CD4-positive, alpha-beta T cell (primary cell): ENCODE measurements at regions of chr11 and their contacts with region 1.

Region 1: DNA sequence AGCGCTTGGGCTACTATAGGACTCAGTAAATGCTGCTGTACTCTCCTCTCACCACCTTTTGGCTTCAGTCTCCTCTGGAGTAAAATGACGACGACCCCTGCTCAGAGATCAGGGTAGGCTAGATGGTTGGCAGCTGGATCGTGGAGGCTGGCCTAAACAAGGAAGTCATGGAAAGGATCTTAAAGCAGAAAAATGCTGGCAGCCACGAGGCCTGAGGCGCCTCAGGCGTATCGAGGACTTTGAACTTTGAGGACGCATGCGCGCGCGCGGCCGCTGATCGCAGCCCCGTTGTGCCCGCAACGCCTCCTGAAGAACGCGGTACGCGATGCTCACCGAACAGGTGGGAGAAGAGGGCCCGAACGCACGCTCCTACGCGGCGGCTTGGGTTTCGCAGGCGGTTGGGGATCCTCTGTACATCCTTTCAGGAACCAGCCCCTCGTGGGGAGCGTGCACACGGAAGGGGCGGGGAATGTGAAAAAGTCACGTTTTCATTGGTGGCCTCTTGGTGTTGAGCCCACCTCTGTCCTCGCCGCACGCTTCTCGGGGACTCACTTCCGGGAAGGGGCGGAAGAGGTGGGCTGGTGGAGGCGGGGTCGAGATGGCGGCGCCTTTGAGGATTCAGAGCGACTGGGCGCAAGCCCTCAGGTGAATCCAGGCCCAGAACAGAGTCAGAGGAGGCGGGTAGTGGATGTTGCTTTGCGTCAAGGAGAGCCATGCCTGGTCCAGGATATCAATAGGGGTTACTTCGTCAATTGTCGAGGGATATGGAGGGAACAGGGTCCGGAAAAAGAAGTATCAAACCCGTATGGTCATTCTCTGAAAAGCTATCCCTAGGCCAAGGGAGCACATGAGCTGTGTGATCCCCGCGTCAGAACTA is at the starts of genes COA4 and PAAF1:
- DNase-seq: peak; percentile 83 to 98 (median 90)
- ATAC-seq: peak; percentile 95
- H3K4me3 ChIP-seq: peak within 1 kb of the TSS; percentile 74
- H3K4me3 Mint-ChIP-seq: peak within 1 kb of the TSS; percentile 96
- H3K27ac ChIP-seq: peak within 1 kb of the TSS; percentile 71 to 90
- H3K27ac Mint-ChIP-seq: peak within 1 kb of the TSS; percentile 91
- H3K4me1 ChIP-seq: peaks cover 30% of the 10 kb centered on the region
- H3K4me1 Mint-ChIP-seq: peaks cover 52% of the 10 kb centered on the region
- H3K27me3 ChIP-seq: no peaks in the 10 kb centered on the region
- H3K27me3 Mint-ChIP-seq: no peaks in the 10 kb centered on the region
- CTCF ChIP-seq: no peak
- total RNA-seq, gene COA4: 20.7 to 23.9 TPM
- total RNA-seq, gene PAAF1: 6.2 to 7.6 TPM

Region 2: DNA sequence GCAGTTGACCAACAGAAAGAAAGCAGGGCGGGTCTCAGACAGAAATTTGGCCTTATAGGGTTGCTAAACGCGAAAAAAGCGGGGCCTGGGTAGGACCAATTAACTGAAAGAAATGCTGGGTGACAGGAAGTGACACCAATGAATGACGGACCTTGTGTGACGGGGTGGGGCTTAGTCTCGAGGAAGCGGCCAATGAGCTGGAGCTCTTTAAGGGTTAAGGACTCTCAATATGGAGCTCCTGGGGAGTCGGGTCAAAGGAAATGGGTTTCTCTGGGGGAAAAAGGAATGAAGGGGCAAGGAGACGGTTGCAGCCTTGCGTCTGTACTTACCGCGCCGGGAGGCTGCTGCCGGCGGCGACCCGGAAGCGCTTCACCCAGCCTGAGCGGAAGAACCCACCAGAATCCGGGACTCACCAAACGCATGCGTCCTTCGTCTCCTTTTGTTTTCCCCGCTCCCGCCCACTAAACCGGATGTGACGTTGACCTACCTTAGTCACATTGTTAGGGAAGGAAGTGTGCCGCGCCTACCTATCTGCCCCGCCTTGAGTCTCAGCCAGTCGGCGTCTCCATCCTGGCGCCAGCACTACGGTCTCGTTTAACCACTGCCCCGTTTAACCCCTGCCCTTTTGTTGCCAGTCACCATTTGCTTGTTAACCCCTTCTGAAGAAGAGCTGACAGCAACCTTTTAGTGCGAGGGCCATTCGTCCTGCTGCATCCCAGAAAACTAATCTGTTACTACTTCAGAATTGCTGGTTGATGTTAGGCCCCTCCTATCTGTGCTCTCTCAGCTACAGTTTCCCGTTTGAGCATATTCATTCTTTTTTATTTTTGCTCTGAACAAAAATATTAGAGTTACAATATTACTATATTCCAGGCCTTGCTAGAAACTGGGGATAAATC is 1764.1 kb before region 1 on chr11 and contains the start of gene ANAPC15:
- CTCF ChIA-PET with region 1: no interaction called
- POLR2A ChIA-PET with region 1: no interaction called
- intact Hi-C with region 1: loop called in 1 of 2 experiments (anchors 5 kb)
- DNase-seq: peak; percentile 93 to 99 (median 97)
- ATAC-seq: peak; percentile 84
- H3K4me3 ChIP-seq: peak within 1 kb of the TSS; percentile 68
- H3K4me3 Mint-ChIP-seq: peak within 1 kb of the TSS; percentile 93
- H3K27ac ChIP-seq: peak within 1 kb of the TSS; percentile 97 to 98
- H3K27ac Mint-ChIP-seq: peak within 1 kb of the TSS; percentile 98
- H3K4me1 ChIP-seq: peaks cover 17% of the 10 kb centered on the region
- H3K4me1 Mint-ChIP-seq: peaks cover 19% of the 10 kb centered on the region
- H3K27me3 ChIP-seq: no peaks in the 10 kb centered on the region
- H3K27me3 Mint-ChIP-seq: no peaks in the 10 kb centered on the region
- CTCF ChIP-seq: no peak
- total RNA-seq, gene ANAPC15: 48.8 to 52.5 TPM

Region 3: GRCh38 chr11:73376160-73376802 is 500.4 kb before region 1 on chr11 and contains the start of gene RELT:
- CTCF ChIA-PET with region 1: no interaction called
- POLR2A ChIA-PET with region 1: no interaction called
- intact Hi-C with region 1: loop called in 1 of 2 experiments (anchors 10 kb)
- DNase-seq: peak; percentile 79 to 97 (median 93)
- ATAC-seq: peak; percentile 94
- H3K4me3 ChIP-seq: peak within 1 kb of the TSS; percentile 84
- H3K4me3 Mint-ChIP-seq: peak within 1 kb of the TSS; percentile 93
- H3K27ac ChIP-seq: peak within 1 kb of the TSS; percentile 78 to 91
- H3K27ac Mint-ChIP-seq: peak within 1 kb of the TSS; percentile 88
- H3K4me1 ChIP-seq: peaks cover 58% of the 10 kb centered on the region
- H3K4me1 Mint-ChIP-seq: peaks cover 42% of the 10 kb centered on the region
- H3K27me3 ChIP-seq: no peaks in the 10 kb centered on the region
- H3K27me3 Mint-ChIP-seq: no peaks in the 10 kb centered on the region
- CTCF ChIP-seq: peak; percentile 86
- total RNA-seq, gene RELT: 107 to 114 TPM

Region 4: DNA sequence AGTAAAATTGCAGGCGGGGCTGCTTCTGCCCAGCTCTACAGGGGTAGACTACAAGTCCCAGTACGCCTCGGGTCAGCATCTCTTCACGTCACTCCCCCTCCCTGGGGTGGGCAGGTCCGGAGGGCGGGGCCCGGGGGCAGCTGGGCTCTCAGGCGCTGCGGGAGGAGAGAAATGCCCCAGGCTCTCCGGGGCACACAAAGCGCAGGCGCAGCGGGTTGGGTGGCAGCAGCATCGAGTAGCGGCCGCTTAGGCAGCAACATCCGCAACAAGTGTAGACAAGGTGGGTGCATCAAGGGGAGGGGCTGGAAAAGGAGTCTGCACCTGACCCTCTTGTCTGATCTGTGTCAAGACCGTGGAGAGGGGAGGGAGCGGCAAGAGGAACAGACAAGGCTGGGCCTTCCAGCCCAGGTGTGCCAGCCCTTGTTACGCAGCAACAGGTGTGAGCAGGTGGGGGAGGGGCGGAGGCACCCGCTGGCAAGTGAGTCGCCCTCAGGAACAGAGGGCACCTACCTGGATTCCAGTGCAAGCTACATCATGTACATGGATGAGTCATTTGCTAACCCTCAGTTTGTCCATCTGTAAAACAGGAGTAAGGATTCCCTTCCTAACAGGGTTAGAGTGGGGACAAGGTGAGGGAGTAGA is 229.1 kb before region 1 on chr11:
- CTCF ChIA-PET with region 1: no interaction called
- POLR2A ChIA-PET with region 1: no interaction called
- intact Hi-C with region 1: loop called in 1 of 2 experiments (anchors 5 kb)
- DNase-seq: peak; percentile 90 to 97 (median 94)
- ATAC-seq: peak; percentile 96
- H3K4me3 ChIP-seq: peak overlapping the region; percentile 55
- H3K4me3 Mint-ChIP-seq: peak overlapping the region; percentile 90
- H3K27ac ChIP-seq: peak overlapping the region in 1 of 2 donors; percentile 34
- H3K27ac Mint-ChIP-seq: peak overlapping the region; percentile 91
- H3K4me1 ChIP-seq: peaks cover 25% of the 10 kb centered on the region
- H3K4me1 Mint-ChIP-seq: peaks cover 28% of the 10 kb centered on the region
- H3K27me3 ChIP-seq: no peaks in the 10 kb centered on the region
- H3K27me3 Mint-ChIP-seq: no peaks in the 10 kb centered on the region
- CTCF ChIP-seq: no peak

Region 5: DNA sequence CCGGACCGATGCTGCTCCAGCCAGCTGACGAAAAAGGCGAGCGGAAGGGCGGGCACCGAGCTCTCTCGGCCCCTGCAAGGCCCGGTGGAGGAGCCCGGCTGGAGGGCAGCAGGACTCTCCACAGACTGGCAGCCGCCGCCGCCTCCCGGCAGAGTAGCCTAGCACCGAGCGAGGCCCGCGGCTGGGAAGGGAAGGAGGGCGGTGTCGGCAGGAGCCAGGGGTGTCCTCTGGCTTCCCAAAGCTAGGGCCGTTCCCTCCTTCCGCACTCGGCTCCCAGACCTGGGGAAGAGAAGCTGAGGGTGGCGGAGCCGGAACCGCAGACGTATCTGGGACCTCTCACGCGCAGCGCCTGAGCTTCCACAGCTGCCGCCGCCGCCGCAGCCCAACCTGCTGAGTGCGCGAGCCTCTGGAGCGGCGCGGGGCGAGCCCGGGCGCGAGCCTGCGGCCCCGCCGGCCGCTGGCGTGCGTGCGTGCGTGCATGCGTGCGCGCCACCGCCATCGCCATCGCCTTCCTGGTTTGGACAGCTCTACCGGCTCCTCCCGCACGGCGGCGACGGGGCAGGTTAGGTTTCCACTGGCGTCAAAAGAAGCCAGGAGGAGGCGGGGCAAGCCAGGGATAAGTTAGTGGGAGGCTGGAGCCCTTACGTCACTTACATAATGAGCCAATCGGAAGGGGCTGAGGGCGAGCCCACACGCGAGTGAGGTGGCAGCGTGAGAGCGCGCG is 115.8 kb before region 1 on chr11 and contains the start of gene RAB6A:
- CTCF ChIA-PET with region 1: interaction called, 4 read pairs
- POLR2A ChIA-PET with region 1: interaction called, 10 read pairs
- intact Hi-C with region 1: loop called (anchors 1 to 2 kb)
- DNase-seq: peak; percentile 98 to 100 (median 100)
- ATAC-seq: peak; percentile 90
- H3K4me3 ChIP-seq: peak within 1 kb of the TSS; percentile 93
- H3K4me3 Mint-ChIP-seq: peak within 1 kb of the TSS; percentile 84
- H3K27ac ChIP-seq: peak within 1 kb of the TSS; percentile 82 to 84
- H3K27ac Mint-ChIP-seq: peak within 1 kb of the TSS; percentile 83
- H3K4me1 ChIP-seq: peaks cover 13% of the 10 kb centered on the region
- H3K4me1 Mint-ChIP-seq: peaks cover 39% of the 10 kb centered on the region
- H3K27me3 ChIP-seq: no peaks in the 10 kb centered on the region
- H3K27me3 Mint-ChIP-seq: no peaks in the 10 kb centered on the region
- CTCF ChIP-seq: no peak
- total RNA-seq, gene RAB6A: 42.6 to 49.3 TPM

Region 6: GRCh38 chr11:73779084-73779902 is 97.4 kb before region 1 on chr11:
- CTCF ChIA-PET with region 1: interaction called, 3 read pairs
- POLR2A ChIA-PET with region 1: interaction called, 12 read pairs
- intact Hi-C with region 1: no loop called
- DNase-seq: peak; percentile 95 to 99 (median 97)
- ATAC-seq: peak; percentile 95
- H3K4me3 ChIP-seq: peak overlapping the region; percentile 78
- H3K4me3 Mint-ChIP-seq: peak overlapping the region; percentile 95
- H3K27ac ChIP-seq: peak overlapping the region; percentile 95 to 99
- H3K27ac Mint-ChIP-seq: peak overlapping the region; percentile 99
- H3K4me1 ChIP-seq: peaks cover 13% of the 10 kb centered on the region
- H3K4me1 Mint-ChIP-seq: peaks cover 14% of the 10 kb centered on the region
- H3K27me3 ChIP-seq: no peaks in the 10 kb centered on the region
- H3K27me3 Mint-ChIP-seq: no peaks in the 10 kb centered on the region
- CTCF ChIP-seq: no peak

Region 7: GRCh38 chr11:73787643-73788537 is 88.8 kb before region 1 on chr11 and contains the start of gene MRPL48:
- CTCF ChIA-PET with region 1: interaction called, 3 read pairs
- POLR2A ChIA-PET with region 1: interaction called, 3 read pairs
- intact Hi-C with region 1: loop called (anchors 2 to 5 kb)
- DNase-seq: peak; percentile 78 to 93 (median 84)
- ATAC-seq: peak; percentile 99
- H3K4me3 ChIP-seq: peak within 1 kb of the TSS; percentile 93
- H3K4me3 Mint-ChIP-seq: peak within 1 kb of the TSS; percentile 99
- H3K27ac ChIP-seq: peak within 1 kb of the TSS; percentile 80 to 87
- H3K27ac Mint-ChIP-seq: peak within 1 kb of the TSS; percentile 100
- H3K4me1 ChIP-seq: peaks cover 19% of the 10 kb centered on the region
- H3K4me1 Mint-ChIP-seq: peaks cover 31% of the 10 kb centered on the region
- H3K27me3 ChIP-seq: no peaks in the 10 kb centered on the region
- H3K27me3 Mint-ChIP-seq: no peaks in the 10 kb centered on the region
- CTCF ChIP-seq: no peak
- total RNA-seq, gene MRPL48: 9.5 to 10.1 TPM

Region 8: DNA sequence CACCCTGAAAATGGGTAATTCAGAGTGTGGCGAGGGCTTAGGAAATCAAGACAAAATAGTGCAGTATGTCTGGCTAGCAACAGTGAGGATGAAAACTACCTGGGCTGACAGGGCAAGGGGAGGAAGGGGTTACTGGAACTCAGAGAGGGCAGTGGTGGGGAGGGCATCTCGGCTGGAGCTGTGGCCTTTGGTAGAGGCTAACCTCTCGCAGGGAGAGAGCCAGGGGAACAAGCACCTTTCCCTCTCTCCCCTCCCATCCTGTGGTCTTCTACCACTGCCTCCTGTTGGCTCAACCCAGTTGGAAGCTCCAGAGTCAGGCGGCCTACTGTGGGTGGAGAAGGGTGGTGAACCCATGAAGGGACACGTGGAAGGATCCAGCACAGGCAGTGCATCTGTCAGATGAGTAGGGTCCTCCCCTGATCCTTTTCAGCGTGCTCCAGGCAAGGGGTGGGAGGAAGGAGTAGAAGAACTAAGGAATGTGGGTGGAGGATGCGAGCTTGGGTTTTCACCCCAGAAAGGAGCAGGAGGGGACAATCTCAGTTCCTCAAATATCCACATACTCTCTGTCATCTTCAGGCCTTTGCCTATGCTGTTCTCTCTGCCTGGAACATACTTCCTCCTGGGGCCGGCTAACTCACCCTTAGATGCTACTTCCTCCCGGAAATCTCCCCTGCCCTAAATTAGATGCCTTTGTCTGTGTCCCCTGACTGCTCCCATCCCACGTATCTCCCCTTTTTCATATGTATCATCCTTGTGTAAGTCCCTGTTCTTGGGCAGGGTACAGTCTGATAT is 596.9 kb after region 1 on chr11:
- CTCF ChIA-PET with region 1: no interaction called
- POLR2A ChIA-PET with region 1: no interaction called
- intact Hi-C with region 1: no loop called
- DNase-seq: peak in 1 of 14 experiments; percentile 22
- ATAC-seq: no peak
- H3K4me3 ChIP-seq: no peak overlapping the region
- H3K4me3 Mint-ChIP-seq: no peak overlapping the region
- H3K27ac ChIP-seq: no peak overlapping the region
- H3K27ac Mint-ChIP-seq: no peak overlapping the region
- H3K4me1 ChIP-seq: no peaks in the 10 kb centered on the region
- H3K4me1 Mint-ChIP-seq: no peaks in the 10 kb centered on the region
- H3K27me3 ChIP-seq: peaks cover 0 to 6% of the 10 kb centered on the region in 2 experiments
- H3K27me3 Mint-ChIP-seq: peaks cover 14% of the 10 kb centered on the region
- CTCF ChIP-seq: no peak